Activated CD4-positive, alpha-beta memory T cell treated with anti-CD3 and anti-CD28 coated beads for 36 hours (primary cell): ENCODE measurements at regions of chr1 and their contacts with region 1.

Region 1: GRCh38 chr1:19257178-19257914 is 5.7 kb downstream of the MRTO4 start:
- DNase-seq: peak; percentile 80
- H3K4me3 Mint-ChIP-seq: peak overlapping the region; percentile 40
- H3K27ac Mint-ChIP-seq: peak overlapping the region; percentile 96
- H3K4me1 Mint-ChIP-seq: peaks cover 51% of the 10 kb centered on the region
- H3K27me3 Mint-ChIP-seq: no peaks in the 10 kb centered on the region

Region 2: DNA sequence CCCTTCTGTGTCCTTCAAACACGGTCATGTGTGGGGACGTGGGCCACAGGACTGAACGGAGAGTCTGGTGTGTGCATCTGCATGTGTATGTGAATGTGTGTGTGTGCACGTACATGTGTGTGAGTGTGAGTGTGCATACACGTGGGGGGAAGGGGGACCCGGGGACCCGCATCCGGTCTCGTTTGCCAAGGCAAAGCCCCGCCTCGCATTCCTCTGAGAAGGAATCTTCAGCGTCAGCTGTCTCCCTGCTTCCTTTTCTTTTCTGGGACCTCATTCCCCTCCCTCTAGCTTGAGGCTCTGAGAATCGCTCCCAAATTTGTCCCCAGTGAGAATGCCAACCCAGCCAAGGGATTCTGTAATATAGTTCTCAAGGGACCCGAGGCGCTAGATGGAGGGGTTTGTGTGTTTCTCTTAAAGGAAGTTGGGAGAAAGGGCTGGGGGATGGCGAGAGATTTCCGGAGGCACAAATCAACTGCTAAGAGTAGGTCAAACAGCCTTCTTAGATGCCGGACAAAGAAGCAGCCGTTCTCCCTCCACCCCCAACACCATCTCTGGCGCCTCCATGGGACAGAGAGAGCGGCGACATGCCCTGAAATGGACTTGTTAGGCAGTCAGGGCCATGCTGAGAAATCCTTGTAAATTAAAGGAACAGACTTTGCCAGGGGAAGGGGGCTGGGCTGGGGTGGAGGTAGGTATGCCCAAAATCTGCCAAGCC is 307.5 kb before region 1 on chr1:
- CTCF ChIA-PET with region 1: no interaction called
- POLR2A ChIA-PET with region 1: interaction called, 8 read pairs
- intact Hi-C with region 1: loop called (anchors 2 kb)
- DNase-seq: peak; percentile 49
- H3K4me3 Mint-ChIP-seq: peak overlapping the region; percentile 80
- H3K27ac Mint-ChIP-seq: peak overlapping the region; percentile 98
- H3K4me1 Mint-ChIP-seq: peaks cover 90% of the 10 kb centered on the region
- H3K27me3 Mint-ChIP-seq: no peaks in the 10 kb centered on the region

Region 3: GRCh38 chr1:19186001-19186400 is 71.3 kb before region 1 on chr1:
- CTCF ChIA-PET with region 1: no interaction called
- POLR2A ChIA-PET with region 1: no interaction called
- intact Hi-C with region 1: loop called (anchors 1 kb)
- DNase-seq: peak; percentile 13
- H3K4me3 Mint-ChIP-seq: no peak overlapping the region
- H3K27ac Mint-ChIP-seq: peak overlapping the region; percentile 57
- H3K4me1 Mint-ChIP-seq: peaks cover 23% of the 10 kb centered on the region
- H3K27me3 Mint-ChIP-seq: no peaks in the 10 kb centered on the region

Region 4: GRCh38 chr1:19240673-19241538 is 16.4 kb before region 1 on chr1:
- CTCF ChIA-PET with region 1: interaction called, 11 read pairs
- POLR2A ChIA-PET with region 1: interaction called, 3 read pairs
- intact Hi-C with region 1: no loop called
- DNase-seq: peak; percentile 81
- H3K4me3 Mint-ChIP-seq: no peak overlapping the region
- H3K27ac Mint-ChIP-seq: no peak overlapping the region
- H3K4me1 Mint-ChIP-seq: no peaks in the 10 kb centered on the region
- H3K27me3 Mint-ChIP-seq: no peaks in the 10 kb centered on the region

Region 5: GRCh38 chr1:19311959-19312781 is 54.8 kb after region 1 on chr1 and contains the starts of genes AKR7A2 and SLC66A1:
- CTCF ChIA-PET with region 1: no interaction called
- POLR2A ChIA-PET with region 1: interaction called, 3 read pairs
- intact Hi-C with region 1: loop called (anchors 2 kb)
- DNase-seq: peak; percentile 91
- H3K4me3 Mint-ChIP-seq: peak within 1 kb of the TSS; percentile 79
- H3K27ac Mint-ChIP-seq: peak within 1 kb of the TSS; percentile 35
- H3K4me1 Mint-ChIP-seq: peaks cover 35% of the 10 kb centered on the region
- H3K27me3 Mint-ChIP-seq: no peaks in the 10 kb centered on the region
- total RNA-seq, gene AKR7A2: 45.5 to 49.4 TPM
- total RNA-seq, gene SLC66A1: 6.8 to 7.9 TPM

Region 6: GRCh38 chr1:19643602-19644394 is 386.5 kb after region 1 on chr1 and contains the start of gene NBL1:
- CTCF ChIA-PET with region 1: no interaction called
- POLR2A ChIA-PET with region 1: no interaction called
- intact Hi-C with region 1: loop called (anchors 2 kb)
- DNase-seq: peak; percentile 78
- H3K4me3 Mint-ChIP-seq: peak within 1 kb of the TSS; percentile 87
- H3K27ac Mint-ChIP-seq: peak within 1 kb of the TSS; percentile 77
- H3K4me1 Mint-ChIP-seq: peaks cover 32% of the 10 kb centered on the region
- H3K27me3 Mint-ChIP-seq: peaks cover 9% of the 10 kb centered on the region
- total RNA-seq, gene NBL1: 25.0 to 31.3 TPM